Psoas muscle (tissue), 8 donors: ENCODE measurements at regions of chr5 and their contacts with region 1.

Region 1: GRCh38 chr5:36279054-36279698 is 22.5 kb downstream of the RANBP3L start:
- DNase-seq: no peak
- ATAC-seq: no peak
- H3K4me3 ChIP-seq: no peak overlapping the region
- H3K27ac ChIP-seq: no peak overlapping the region
- H3K4me1 ChIP-seq: peaks cover 16% of the 10 kb centered on the region
- H3K27me3 ChIP-seq: no peaks in the 10 kb centered on the region
- CTCF ChIP-seq: no peak

Region 2: DNA sequence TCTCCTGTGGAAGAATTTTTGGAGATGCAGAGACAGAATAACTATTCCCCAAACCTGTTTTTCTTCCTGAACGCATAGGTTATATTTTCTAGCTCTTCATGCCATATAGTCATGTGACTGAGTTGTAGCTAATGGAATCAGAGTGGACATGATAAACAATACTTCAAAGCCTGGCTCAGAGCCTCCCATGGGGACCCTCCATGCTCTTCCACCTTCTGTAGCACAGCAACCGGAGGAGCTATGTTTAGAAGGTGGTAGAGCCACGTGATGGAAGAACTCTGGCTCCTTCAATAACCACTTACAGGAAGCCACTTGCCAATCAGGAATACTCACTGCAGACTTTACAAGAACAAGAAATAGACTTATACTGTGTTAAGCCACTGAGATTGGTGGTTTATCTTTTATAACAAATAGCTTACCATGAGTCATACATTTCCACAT is 76.6 kb before region 1 on chr5:
- intact Hi-C with region 1: no loop called
- DNase-seq: no peak
- ATAC-seq: peak; percentile 28 to 64 (median 48)
- H3K4me3 ChIP-seq: no peak overlapping the region
- H3K27ac ChIP-seq: no peak overlapping the region
- H3K4me1 ChIP-seq: no peaks in the 10 kb centered on the region
- H3K27me3 ChIP-seq: no peaks in the 10 kb centered on the region
- CTCF ChIP-seq: no peak

Region 3: DNA sequence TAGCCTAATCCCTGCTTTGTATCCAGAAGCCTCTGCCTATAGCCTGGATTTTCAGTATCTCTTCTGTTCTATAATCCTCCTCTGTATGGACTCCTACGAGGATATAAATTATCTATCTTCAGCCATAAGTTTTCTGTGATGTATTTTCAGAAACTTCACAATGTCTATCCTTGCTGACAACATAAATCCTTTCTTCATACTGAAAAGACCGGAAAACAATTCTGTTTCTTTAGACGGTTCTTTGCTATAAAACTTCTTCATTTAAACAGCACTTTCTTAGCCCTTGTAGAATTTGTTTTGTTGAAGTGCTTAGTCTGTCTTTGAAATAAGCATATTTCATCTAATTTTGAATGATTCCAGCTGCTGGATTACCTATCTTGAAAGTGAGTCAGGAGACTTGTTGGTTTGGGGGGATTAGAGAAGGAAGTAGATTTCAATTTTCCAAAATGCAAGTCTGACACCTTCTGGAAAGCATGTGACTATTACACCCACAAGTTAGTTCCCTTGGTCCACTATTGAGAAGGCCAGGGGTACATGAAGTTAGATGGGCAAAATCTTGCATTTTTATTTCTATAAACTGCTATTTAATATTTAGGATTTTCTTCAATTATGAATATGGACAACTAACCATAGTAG is 118.8 kb after region 1 on chr5:
- intact Hi-C with region 1: loop called in 1 of 2 experiments (anchors 10 kb)
- DNase-seq: no peak
- ATAC-seq: peak in 1 of 4 donors; percentile 44
- H3K4me3 ChIP-seq: no peak overlapping the region
- H3K27ac ChIP-seq: no peak overlapping the region
- H3K4me1 ChIP-seq: no peaks in the 10 kb centered on the region
- H3K27me3 ChIP-seq: no peaks in the 10 kb centered on the region
- CTCF ChIP-seq: peak; percentile 25